ENCODE measurements at regions of chr5 and their contacts with region 1.

Region 1: GRCh38 chr5:41869739-41870626 is at the start of gene OXCT1:
- DNase-seq: peak; percentile 38 to 62
- ATAC-seq: peak; percentile 71 to 80
- H3K4me3 ChIP-seq: peak within 1 kb of the TSS; percentile 74 to 87 (median 84)
- H3K27ac ChIP-seq: peak within 1 kb of the TSS; percentile 80 to 89 (median 86)
- H3K4me1 ChIP-seq: peaks cover 7 to 11% of the 10 kb centered on the region in 2 donors
- H3K27me3 ChIP-seq: no peaks in the 10 kb centered on the region
- CTCF ChIP-seq: no peak
- POLR2A ChIP-seq: peak; percentile 62 to 81
- total RNA-seq, gene OXCT1: 9.4 to 45.4 (median 20.5) TPM

Region 2: GRCh38 chr5:41995193-41995592 is 125.2 kb after region 1 on chr5:
- in situ Hi-C with region 1: no loop called
- intact Hi-C with region 1: no loop called
- DNase-seq: no peak
- ATAC-seq: no peak
- H3K4me3 ChIP-seq: no peak overlapping the region
- H3K27ac ChIP-seq: no peak overlapping the region
- H3K4me1 ChIP-seq: no peaks in the 10 kb centered on the region
- H3K27me3 ChIP-seq: no peaks in the 10 kb centered on the region
- CTCF ChIP-seq: no peak
- POLR2A ChIP-seq: no peak

Region 3: DNA sequence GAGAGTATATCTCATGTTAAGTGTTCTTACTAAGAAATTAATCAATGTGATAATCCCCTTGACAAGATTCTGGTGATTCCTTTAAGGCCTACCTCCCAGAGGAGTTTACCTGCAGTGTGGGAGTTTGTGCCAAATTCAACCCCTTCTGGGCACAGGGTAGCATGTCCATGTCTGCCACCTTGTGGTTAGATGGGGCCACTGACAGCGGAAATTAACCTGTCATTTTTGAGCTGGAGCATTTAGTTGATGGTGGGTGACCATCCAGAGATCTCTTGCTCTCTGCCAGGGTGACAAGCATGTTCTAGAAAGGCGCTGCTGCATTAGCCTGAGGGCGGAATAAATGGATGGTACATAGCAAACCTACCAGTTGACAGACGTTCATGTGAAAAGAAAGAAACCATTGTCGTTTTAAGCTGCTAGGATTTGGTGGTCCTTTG is 187.3 kb after region 1 on chr5:
- in situ Hi-C with region 1: loop called in 1 of 4 experiments (anchors 25 kb)
- intact Hi-C with region 1: no loop called
- DNase-seq: peak in 1 of 2 donors; percentile 19
- ATAC-seq: peak in 1 of 2 donors; percentile 44
- H3K4me3 ChIP-seq: no peak overlapping the region
- H3K27ac ChIP-seq: no peak overlapping the region
- H3K4me1 ChIP-seq: no peaks in the 10 kb centered on the region
- H3K27me3 ChIP-seq: no peaks in the 10 kb centered on the region
- CTCF ChIP-seq: peak in 4 of 5 experiments; percentile 42 to 71 (median 51)
- POLR2A ChIP-seq: no peak

Measured in gastrocnemius medialis (tissue), 4 donors.